RWPE1 (cell line): ENCODE measurements at regions of chr19 and their contacts with region 1.

Region 1: GRCh38 chr19:42596391-42597072 is 1.8 kb upstream of the CEACAM8 start:
- DNase-seq: no peak
- H3K27ac ChIP-seq: no peak overlapping the region
- CTCF ChIP-seq: peak; percentile 95

Region 2: GRCh38 chr19:42606660-42607351 is 10.3 kb after region 1 on chr19:
- CTCF ChIA-PET with region 1: interaction called, 12 read pairs
- POLR2A ChIA-PET with region 1: no interaction called
- DNase-seq: peak; percentile 68
- H3K27ac ChIP-seq: no peak overlapping the region
- CTCF ChIP-seq: peak; percentile 82